AG04450 (cell line): ENCODE measurements at regions of chr1 and their contacts with region 1.

Region 1: DNA sequence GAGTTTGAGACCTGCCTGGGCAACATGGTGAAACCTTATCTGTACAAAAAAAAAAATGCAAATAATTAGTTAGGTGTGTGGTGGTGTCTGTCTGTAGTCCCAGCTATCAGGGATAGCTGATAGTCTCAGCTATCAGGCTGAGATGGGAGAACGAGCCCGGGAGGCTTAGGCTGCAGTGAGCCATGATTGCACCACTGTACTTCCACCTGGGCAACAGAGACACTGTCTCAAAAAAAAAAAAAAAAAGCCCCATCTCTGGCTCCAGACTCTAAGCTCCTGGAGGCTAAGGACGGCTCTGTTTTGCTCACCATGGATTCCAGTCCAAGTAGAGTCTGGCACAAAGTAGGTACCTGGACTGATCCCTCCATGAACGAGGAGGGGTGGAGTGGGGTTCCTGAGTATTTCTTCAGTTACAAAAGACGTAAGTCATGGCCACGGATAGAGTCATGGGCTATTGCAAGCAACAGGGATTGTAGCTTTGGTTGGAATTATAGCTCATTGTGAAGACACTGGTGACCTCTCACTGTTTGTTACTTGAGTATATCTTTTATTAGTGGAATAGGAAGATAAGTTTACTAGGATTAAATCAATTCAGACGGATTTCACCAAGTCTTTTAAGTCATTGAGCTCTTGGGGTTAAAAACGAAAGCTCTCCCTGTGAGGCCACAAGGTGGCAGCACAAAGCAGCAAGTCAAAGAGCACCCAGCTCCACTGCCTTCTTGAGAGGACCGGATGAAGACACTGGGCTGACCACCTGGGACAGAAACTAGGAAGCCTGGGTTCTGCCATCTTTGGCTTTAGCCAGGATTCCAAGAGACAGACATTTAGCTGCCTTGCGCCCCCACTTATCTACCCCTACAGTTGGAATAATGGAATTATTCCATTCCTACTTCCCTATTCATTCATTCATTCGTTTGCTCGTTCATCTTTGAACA is 35.6 kb upstream of the TMEM61 start:
- DNase-seq: peak; percentile 63
- H3K4me3 ChIP-seq: no peak overlapping the region
- H3K27ac ChIP-seq: no peak overlapping the region
- H3K27me3 ChIP-seq: no peaks in the 10 kb centered on the region
- CTCF ChIP-seq: peak; percentile 87

Region 2: DNA sequence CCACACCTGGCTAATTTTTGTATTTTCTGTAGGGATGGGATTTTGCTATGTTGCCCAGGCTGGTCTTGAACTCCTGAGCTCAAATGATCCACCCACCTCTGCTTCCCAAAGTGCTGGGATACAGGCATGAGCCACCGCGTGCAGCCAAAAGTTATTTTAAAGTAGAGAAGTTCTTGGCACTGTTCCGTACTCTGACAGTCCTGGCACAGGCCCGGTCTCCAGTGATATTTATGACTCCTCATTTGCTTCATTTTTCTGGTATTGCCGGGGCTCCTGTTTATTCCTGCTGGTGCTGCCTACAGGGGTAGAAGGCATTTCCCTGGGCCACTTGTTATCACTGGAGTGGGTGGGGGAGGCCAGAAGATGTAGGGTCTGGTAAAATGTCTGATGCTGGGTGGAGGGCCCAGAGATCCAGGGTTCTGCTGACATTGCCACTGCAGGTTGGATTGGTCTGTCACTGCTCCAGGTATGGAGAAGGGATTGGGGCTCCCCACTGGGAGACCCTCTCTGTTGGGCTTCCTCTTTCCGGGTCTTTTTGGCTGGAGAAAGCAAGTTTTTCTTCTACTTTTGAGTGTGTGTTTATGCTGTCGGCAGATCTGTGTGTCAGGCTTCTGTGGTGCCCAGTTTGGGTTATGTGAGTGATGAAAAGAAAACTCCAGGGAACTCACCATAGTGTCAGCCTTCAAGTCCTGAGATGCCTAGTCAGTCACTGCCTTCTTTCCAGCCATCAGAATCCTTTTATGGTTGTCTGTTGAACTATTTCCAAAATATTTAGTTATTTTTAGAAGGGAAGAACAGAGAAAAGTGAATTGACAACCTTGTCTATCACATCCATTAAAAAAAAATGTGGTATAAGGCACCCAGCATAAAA is 298.8 kb before region 1 on chr1:
- CTCF ChIA-PET with region 1: no interaction called
- POLR2A ChIA-PET with region 1: no interaction called
- DNase-seq: no peak
- H3K4me3 ChIP-seq: no peak overlapping the region
- H3K27ac ChIP-seq: no peak overlapping the region
- H3K27me3 ChIP-seq: peaks cover 13% of the 10 kb centered on the region
- CTCF ChIP-seq: no peak

Region 3: DNA sequence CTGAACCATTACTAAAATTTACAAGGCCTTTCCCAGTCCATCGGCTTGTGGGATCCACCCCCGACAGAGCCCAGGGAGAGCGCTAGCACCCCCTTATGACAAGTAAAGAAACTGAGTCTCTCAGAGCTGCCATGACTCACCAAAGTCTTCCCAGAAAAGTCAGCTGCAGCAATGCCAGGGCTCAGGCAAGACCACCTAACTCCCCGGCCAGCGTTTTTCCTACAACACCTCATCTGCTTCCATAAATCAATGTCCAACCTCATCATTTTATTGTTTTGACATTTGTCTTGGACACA is 72.9 kb before region 1 on chr1:
- CTCF ChIA-PET with region 1: interaction called, 20 read pairs
- POLR2A ChIA-PET with region 1: no interaction called
- DNase-seq: no peak
- H3K4me3 ChIP-seq: no peak overlapping the region
- H3K27ac ChIP-seq: no peak overlapping the region
- H3K27me3 ChIP-seq: no peaks in the 10 kb centered on the region
- CTCF ChIP-seq: no peak

Region 4: GRCh38 chr1:54904476-54905048 is 40.3 kb before region 1 on chr1:
- CTCF ChIA-PET with region 1: interaction called, 11 read pairs
- POLR2A ChIA-PET with region 1: no interaction called
- DNase-seq: peak; percentile 41
- H3K4me3 ChIP-seq: no peak overlapping the region
- H3K27ac ChIP-seq: no peak overlapping the region
- H3K27me3 ChIP-seq: no peaks in the 10 kb centered on the region
- CTCF ChIP-seq: no peak

Region 5: DNA sequence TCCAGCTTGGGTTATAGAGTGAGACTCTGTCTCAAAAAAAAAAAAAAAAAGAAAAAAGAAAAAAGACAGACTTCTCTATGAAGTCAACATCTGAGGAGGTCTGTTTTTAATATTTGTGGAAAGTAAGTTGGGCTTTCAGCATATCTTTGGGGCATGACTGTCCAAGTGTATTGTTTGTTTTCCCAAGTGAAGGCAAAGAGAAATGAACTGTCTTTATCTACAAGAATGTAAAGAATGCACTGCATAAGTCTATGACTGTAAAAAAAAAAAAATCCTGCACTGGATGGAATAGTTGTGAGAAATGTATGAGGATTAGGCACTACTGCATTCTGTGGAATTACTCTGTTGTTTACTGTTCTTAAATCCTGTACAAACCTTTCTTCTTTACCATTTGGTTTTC is 10.0 kb before region 1 on chr1:
- CTCF ChIA-PET with region 1: interaction called, 47 read pairs
- POLR2A ChIA-PET with region 1: no interaction called
- DNase-seq: peak; percentile 88
- H3K4me3 ChIP-seq: no peak overlapping the region
- H3K27ac ChIP-seq: peak overlapping the region; percentile 83
- H3K27me3 ChIP-seq: no peaks in the 10 kb centered on the region
- CTCF ChIP-seq: no peak

Region 6: GRCh38 chr1:54962612-54963395 is 17.9 kb after region 1 on chr1:
- CTCF ChIA-PET with region 1: interaction called, 19 read pairs
- POLR2A ChIA-PET with region 1: no interaction called
- DNase-seq: no peak
- H3K4me3 ChIP-seq: no peak overlapping the region
- H3K27ac ChIP-seq: no peak overlapping the region
- H3K27me3 ChIP-seq: no peaks in the 10 kb centered on the region
- CTCF ChIP-seq: no peak

Region 7: GRCh38 chr1:54996359-54996868 is 51.5 kb after region 1 on chr1:
- CTCF ChIA-PET with region 1: interaction called, 223 read pairs
- POLR2A ChIA-PET with region 1: interaction called, 3 read pairs
- DNase-seq: no peak
- H3K4me3 ChIP-seq: no peak overlapping the region
- H3K27ac ChIP-seq: no peak overlapping the region
- H3K27me3 ChIP-seq: peaks cover 60% of the 10 kb centered on the region
- CTCF ChIP-seq: peak; percentile 75